MCF 10A (cell line): ENCODE measurements at regions of chrX and their contacts with region 1.

Region 1: GRCh38 chrX:22081475-22082092 is 49.5 kb downstream of the PHEX start:
- DNase-seq: peak; percentile 79
- H3K4me3 Mint-ChIP-seq: no peak overlapping the region
- H3K27ac Mint-ChIP-seq: no peak overlapping the region
- H3K4me1 Mint-ChIP-seq: peaks cover 6% of the 10 kb centered on the region
- H3K27me3 Mint-ChIP-seq: peaks cover 53% of the 10 kb centered on the region
- CTCF ChIP-seq: peak; percentile 86

Region 2: GRCh38 chrX:22025751-22026150 is 55.8 kb before region 1 on chrX:
- CTCF ChIA-PET with region 1: no interaction called
- POLR2A ChIA-PET with region 1: no interaction called
- intact Hi-C with region 1: no loop called
- DNase-seq: no peak
- H3K4me3 Mint-ChIP-seq: no peak overlapping the region
- H3K27ac Mint-ChIP-seq: no peak overlapping the region
- H3K4me1 Mint-ChIP-seq: no peaks in the 10 kb centered on the region
- H3K27me3 Mint-ChIP-seq: peaks cover 57% of the 10 kb centered on the region
- CTCF ChIP-seq: no peak

Region 3: GRCh38 chrX:22063284-22063683 is 18.3 kb before region 1 on chrX:
- CTCF ChIA-PET with region 1: interaction called, 15 read pairs
- POLR2A ChIA-PET with region 1: no interaction called
- intact Hi-C with region 1: no loop called
- DNase-seq: no peak
- H3K4me3 Mint-ChIP-seq: no peak overlapping the region
- H3K27ac Mint-ChIP-seq: no peak overlapping the region
- H3K4me1 Mint-ChIP-seq: peaks cover 11% of the 10 kb centered on the region
- H3K27me3 Mint-ChIP-seq: peaks cover 97% of the 10 kb centered on the region
- CTCF ChIP-seq: no peak

Region 4: GRCh38 chrX:22069586-22069985 is 12.0 kb before region 1 on chrX:
- CTCF ChIA-PET with region 1: interaction called, 15 read pairs
- POLR2A ChIA-PET with region 1: no interaction called
- intact Hi-C with region 1: no loop called
- DNase-seq: no peak
- H3K4me3 Mint-ChIP-seq: no peak overlapping the region
- H3K27ac Mint-ChIP-seq: no peak overlapping the region
- H3K4me1 Mint-ChIP-seq: no peaks in the 10 kb centered on the region
- H3K27me3 Mint-ChIP-seq: peaks cover 41% of the 10 kb centered on the region
- CTCF ChIP-seq: no peak

Region 5: DNA sequence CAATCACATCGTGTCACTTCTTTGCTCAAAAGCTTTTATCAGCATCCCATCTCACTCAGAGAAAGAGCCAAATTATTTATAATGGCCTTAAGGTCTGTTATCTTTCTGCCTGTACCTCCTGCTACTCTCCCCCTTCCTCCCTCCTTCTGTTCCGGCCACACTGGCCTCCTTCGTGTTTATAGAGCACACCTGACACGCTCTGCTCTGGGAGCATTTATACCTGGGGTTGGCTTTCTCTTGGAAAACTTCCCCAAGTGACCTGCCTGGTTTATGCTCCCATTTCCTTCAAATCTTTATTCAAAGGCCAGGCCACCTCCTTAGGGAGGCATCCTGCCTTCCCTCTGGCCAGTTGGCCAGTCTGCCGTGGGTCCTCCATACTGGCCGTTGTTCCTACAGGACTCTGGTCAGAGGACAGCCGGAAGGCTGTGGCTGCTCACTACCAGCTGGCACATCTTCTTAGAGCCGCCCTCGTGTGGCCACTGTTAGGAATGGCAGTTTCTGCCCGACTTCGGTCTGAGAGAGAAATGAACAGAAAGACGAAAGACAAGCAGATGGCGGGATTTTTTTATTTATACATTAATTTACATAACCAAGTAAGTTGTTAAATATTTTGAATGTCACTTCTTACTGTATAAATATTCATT is 111.0 kb after region 1 on chrX:
- CTCF ChIA-PET with region 1: interaction called, 7 read pairs
- POLR2A ChIA-PET with region 1: no interaction called
- intact Hi-C with region 1: loop called (anchors 1 kb)
- DNase-seq: peak; percentile 75
- H3K4me3 Mint-ChIP-seq: no peak overlapping the region
- H3K27ac Mint-ChIP-seq: no peak overlapping the region
- H3K4me1 Mint-ChIP-seq: peaks cover 6% of the 10 kb centered on the region
- H3K27me3 Mint-ChIP-seq: peaks cover 60% of the 10 kb centered on the region
- CTCF ChIP-seq: peak; percentile 76